IMR-90 (cell line): ENCODE measurements at regions of chr9 and their contacts with region 1.

Region 1: DNA sequence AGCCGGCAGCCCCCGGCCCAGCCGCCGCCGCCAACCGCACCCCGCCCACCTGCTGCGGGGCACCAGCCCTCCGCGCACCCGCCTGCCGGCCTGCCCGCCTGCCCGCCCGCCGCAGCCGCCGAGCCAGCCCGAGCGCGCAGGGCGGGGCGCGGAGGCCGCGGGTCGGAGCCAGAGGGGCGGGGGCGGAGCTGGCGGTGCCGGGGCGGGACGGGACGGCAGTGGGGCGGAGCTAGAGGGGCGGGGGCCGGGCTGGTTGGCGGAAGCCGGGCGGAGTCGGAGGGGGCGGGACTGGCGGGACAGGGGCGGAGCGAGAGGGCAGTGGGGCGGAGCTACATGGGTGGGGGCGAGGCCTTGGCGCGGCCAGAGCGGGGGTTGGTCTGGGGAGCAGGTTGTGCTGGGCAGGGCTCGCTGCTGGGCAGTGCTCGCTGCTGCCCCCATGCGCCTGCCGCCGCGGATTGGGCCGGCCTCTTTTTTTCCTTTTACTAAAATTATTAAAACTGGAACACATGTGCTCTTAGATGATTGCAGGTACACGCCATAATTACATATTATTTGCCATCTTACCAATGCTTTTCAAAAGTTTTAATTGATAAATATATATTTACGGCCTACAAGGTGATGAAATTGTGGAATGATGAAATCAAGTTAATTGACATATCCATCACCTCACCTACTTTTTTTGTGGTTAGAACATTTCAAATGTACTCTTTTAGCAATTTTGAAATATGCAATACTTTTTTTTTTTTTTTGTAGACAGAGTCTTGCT is at the start of gene SH3GLB2:
- DNase-seq: peak; percentile 95
- ATAC-seq: peak; percentile 95
- H3K4me3 ChIP-seq: peak within 1 kb of the TSS; percentile 96
- H3K27ac ChIP-seq: peak within 1 kb of the TSS; percentile 67
- H3K4me1 ChIP-seq: peaks cover 15% of the 10 kb centered on the region
- H3K27me3 ChIP-seq: no peaks in the 10 kb centered on the region
- CTCF ChIP-seq: peak; percentile 94
- POLR2A ChIP-seq: no peak
- RAD21 ChIP-seq: peak; percentile 57
- total RNA-seq, gene SH3GLB2: 26.4 and 36.4 TPM in 2 replicates

Region 2: GRCh38 chr9:128845155-128845931 is 183.0 kb before region 1 on chr9:
- CTCF ChIA-PET with region 1: no interaction called
- POLR2A ChIA-PET with region 1: no interaction called
- dilution Hi-C with region 1: no loop called
- in situ Hi-C with region 1: no loop called
- intact Hi-C with region 1: loop called (anchors 5 kb)
- DNase-seq: no peak
- ATAC-seq: peak; percentile 82
- H3K4me3 ChIP-seq: no peak overlapping the region
- H3K27ac ChIP-seq: no peak overlapping the region
- H3K4me1 ChIP-seq: no peaks in the 10 kb centered on the region
- H3K27me3 ChIP-seq: no peaks in the 10 kb centered on the region
- CTCF ChIP-seq: 0 out of 2 replicates have a peak, but pooled peaks have one; percentile 3
- POLR2A ChIP-seq: no peak
- RAD21 ChIP-seq: no peak

Region 3: GRCh38 chr9:129006328-129007034 is 21.9 kb before region 1 on chr9:
- CTCF ChIA-PET with region 1: no interaction called
- POLR2A ChIA-PET with region 1: no interaction called
- dilution Hi-C with region 1: no loop called
- in situ Hi-C with region 1: no loop called
- intact Hi-C with region 1: loop called (anchors 1 kb)
- DNase-seq: peak; percentile 65
- ATAC-seq: peak; percentile 95
- H3K4me3 ChIP-seq: no peak overlapping the region
- H3K27ac ChIP-seq: no peak overlapping the region
- H3K4me1 ChIP-seq: no peaks in the 10 kb centered on the region
- H3K27me3 ChIP-seq: no peaks in the 10 kb centered on the region
- CTCF ChIP-seq: peak; percentile 97
- POLR2A ChIP-seq: no peak
- RAD21 ChIP-seq: peak; percentile 58